ENCODE measurements at regions of chr3 and their contacts with region 1.

Region 1: GRCh38 chr3:11060500-11061251 is 68.1 kb downstream of the SLC6A1 start:
- DNase-seq: peak; percentile 73 to 87 (median 82)
- ATAC-seq: peak; percentile 78 to 82
- H3K4me3 ChIP-seq: no peak overlapping the region
- H3K27ac ChIP-seq: no peak overlapping the region
- H3K4me1 ChIP-seq: no peaks in the 10 kb centered on the region
- H3K27me3 ChIP-seq: no peaks in the 10 kb centered on the region

Region 2: DNA sequence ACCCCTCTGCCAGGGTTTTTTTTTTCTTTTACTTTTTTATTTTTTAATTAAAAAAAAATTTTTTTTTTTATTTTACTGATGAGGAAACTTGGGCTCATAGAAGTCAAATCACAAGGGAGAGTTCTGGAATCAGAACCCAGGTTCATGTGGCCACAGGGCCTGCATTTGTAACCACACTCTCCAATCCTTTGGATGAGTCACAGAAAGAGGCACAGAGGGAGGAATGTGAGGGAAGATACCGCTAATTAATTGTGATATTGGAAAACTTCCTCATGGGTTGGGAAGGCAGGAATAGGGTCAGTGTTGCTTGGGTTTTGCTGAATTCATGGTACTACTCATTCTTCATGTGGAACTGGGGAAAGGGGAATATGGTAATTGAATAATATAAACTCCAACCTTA is 377.6 kb before region 1 on chr3:
- intact Hi-C with region 1: no loop called
- DNase-seq: no peak
- ATAC-seq: no peak
- H3K4me3 ChIP-seq: no peak overlapping the region
- H3K27ac ChIP-seq: no peak overlapping the region
- H3K4me1 ChIP-seq: no peaks in the 10 kb centered on the region
- H3K27me3 ChIP-seq: no peaks in the 10 kb centered on the region

Region 3: DNA sequence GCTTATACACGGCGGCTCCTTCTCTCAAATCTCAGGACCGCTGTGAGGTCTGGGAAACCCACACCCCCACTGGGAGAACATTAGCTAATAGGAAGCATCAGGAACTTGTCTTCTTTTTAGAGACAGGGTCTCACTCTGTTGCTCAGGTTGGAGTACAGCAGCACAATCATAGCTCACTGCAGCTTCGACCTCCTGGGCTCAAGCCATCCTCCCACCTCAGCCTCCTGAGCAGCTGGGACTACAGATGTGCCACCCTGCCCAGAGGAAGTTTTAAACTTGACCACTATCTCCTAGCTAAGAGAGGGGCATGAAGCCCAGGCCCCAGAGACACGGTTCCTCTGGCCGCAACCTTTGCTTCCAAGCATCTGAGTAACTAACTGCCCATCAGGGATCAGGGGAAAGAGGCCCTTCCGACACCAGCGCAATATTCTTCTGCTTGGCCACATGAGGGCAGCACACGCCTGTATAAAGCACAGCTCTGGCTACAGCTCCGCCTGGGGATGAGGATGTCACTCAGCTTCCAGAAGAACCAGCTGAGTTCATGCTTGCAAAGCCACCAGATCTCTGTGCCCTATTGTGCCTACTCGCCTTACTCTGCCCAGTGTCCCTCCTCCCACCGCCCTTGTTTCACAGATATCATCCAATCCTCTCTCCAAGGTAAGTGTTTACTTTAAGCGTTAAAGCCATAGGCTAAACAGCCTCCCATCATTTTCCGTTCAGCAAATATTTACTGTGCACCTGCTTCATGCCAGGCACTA is 302.2 kb before region 1 on chr3:
- intact Hi-C with region 1: loop called (anchors 5 to 10 kb)
- DNase-seq: peak; percentile 46 to 76 (median 61)
- ATAC-seq: peak; percentile 79 to 90
- H3K4me3 ChIP-seq: no peak overlapping the region
- H3K27ac ChIP-seq: no peak overlapping the region
- H3K4me1 ChIP-seq: no peaks in the 10 kb centered on the region
- H3K27me3 ChIP-seq: no peaks in the 10 kb centered on the region

Region 4: GRCh38 chr3:10764259-10765051 is 296.2 kb before region 1 on chr3:
- intact Hi-C with region 1: loop called (anchors 5 to 10 kb)
- DNase-seq: no peak
- ATAC-seq: no peak
- H3K4me3 ChIP-seq: no peak overlapping the region
- H3K27ac ChIP-seq: no peak overlapping the region
- H3K4me1 ChIP-seq: no peaks in the 10 kb centered on the region
- H3K27me3 ChIP-seq: no peaks in the 10 kb centered on the region

Region 5: GRCh38 chr3:10945683-10946287 is 114.9 kb before region 1 on chr3:
- intact Hi-C with region 1: loop called (anchors 1 to 2 kb)
- DNase-seq: peak; percentile 59 to 86 (median 85)
- ATAC-seq: peak; percentile 77 to 86
- H3K4me3 ChIP-seq: no peak overlapping the region
- H3K27ac ChIP-seq: no peak overlapping the region
- H3K4me1 ChIP-seq: no peaks in the 10 kb centered on the region
- H3K27me3 ChIP-seq: no peaks in the 10 kb centered on the region

Region 6: DNA sequence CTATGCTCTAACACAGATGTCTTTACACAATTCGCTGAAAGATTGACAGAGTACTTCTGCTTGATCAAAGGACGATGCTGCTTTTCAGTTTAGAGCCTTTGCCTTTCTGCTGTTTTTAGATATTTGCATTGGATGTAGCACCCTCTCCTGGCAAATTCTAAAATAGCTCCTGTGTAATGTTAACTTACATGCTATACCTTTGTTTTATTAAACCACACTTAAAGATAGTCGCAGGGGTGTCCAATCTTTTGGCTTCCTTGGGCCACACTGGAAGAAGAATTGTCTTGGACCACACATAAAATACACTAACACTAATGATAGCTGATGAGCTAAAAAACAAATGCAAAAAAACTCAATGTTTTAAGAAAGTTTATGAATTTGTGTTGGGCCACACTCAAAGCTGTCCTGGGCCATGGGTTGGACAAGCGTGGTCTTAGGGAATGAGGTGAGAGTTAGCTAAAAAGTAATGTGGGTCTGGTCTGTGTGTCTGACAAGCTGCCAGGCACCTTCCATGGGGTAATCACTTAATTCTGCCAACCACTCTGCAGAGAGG is 274.5 kb after region 1 on chr3:
- intact Hi-C with region 1: loop called (anchors 5 to 10 kb)
- DNase-seq: no peak
- ATAC-seq: peak; percentile 57 to 74
- H3K4me3 ChIP-seq: no peak overlapping the region
- H3K27ac ChIP-seq: no peak overlapping the region
- H3K4me1 ChIP-seq: no peaks in the 10 kb centered on the region
- H3K27me3 ChIP-seq: no peaks in the 10 kb centered on the region

Measured in right cardiac atrium (tissue), 5 donors.